HepG2 (cell line): ENCODE measurements at regions of chr9 and their contacts with region 1.

Region 1: GRCh38 chr9:73733771-73734170 is 582.1 kb downstream of the ANXA1 start:
- DNase-seq: no peak
- ATAC-seq: no peak
- H3K4me3 ChIP-seq: no peak overlapping the region
- H3K27ac ChIP-seq: no peak overlapping the region
- H3K4me1 ChIP-seq: no peaks in the 10 kb centered on the region
- H3K27me3 ChIP-seq: no peaks in the 10 kb centered on the region
- CTCF ChIP-seq: no peak
- EP300 ChIP-seq: no peak
- POLR2A ChIP-seq: no peak
- RAD21 ChIP-seq: no peak

Region 2: DNA sequence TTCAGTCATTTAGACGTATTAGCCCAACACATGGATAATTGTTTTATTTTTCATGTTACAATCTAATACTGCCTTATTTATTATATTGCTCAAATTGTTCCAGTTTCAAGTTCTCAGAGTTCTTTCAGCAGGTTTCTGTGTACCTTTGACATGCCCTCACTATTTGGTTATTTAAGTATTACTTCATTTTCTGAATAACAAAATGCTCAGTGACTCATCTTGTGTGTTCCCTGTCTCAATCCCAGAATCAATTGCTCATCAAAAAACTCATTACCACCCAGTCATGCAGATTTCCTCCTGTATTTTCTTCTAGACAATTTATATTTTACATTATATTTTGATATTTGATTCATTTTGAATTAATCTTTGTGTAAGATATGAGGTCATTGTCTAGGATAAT is 19.5 kb before region 1 on chr9:
- CTCF ChIA-PET with region 1: no interaction called
- POLR2A ChIA-PET with region 1: no interaction called
- in situ Hi-C with region 1: no loop called
- intact Hi-C with region 1: no loop called
- DNase-seq: no peak
- ATAC-seq: no peak
- H3K4me3 ChIP-seq: no peak overlapping the region
- H3K27ac ChIP-seq: no peak overlapping the region
- H3K4me1 ChIP-seq: no peaks in the 10 kb centered on the region
- H3K27me3 ChIP-seq: no peaks in the 10 kb centered on the region
- CTCF ChIP-seq: no peak
- EP300 ChIP-seq: no peak
- POLR2A ChIP-seq: no peak
- RAD21 ChIP-seq: no peak

Region 3: DNA sequence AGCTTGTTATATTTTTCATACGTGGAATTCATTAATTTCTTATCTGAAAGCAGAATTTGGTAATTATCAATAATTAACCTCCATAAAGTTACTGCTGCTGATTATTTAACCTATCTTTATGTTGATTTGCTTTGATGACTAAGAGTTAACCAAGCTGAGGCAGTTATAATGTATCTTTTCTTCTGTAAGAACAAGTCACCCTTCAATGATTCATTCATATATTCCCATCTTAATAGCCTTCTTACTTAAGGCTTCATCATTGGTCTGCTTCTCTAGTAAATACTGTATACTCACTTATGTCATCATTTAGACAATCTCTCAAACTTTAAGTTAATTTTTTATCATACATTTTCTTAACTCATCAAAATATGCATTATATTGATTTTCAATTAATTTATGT is 10.1 kb after region 1 on chr9:
- CTCF ChIA-PET with region 1: no interaction called
- POLR2A ChIA-PET with region 1: no interaction called
- in situ Hi-C with region 1: no loop called
- intact Hi-C with region 1: loop called (anchors 2 kb)
- DNase-seq: no peak
- ATAC-seq: no peak
- H3K4me3 ChIP-seq: no peak overlapping the region
- H3K27ac ChIP-seq: no peak overlapping the region
- H3K4me1 ChIP-seq: no peaks in the 10 kb centered on the region
- H3K27me3 ChIP-seq: no peaks in the 10 kb centered on the region
- CTCF ChIP-seq: no peak
- EP300 ChIP-seq: no peak
- POLR2A ChIP-seq: no peak
- RAD21 ChIP-seq: no peak